Activated CD8-positive, alpha-beta T cell treated with anti-CD3 and anti-CD28 coated beads, Interleukin-2, amount 10 ng/mL, durations not matched to agents 7 days and 5 days (primary cell): ENCODE measurements at regions of chr1 and their contacts with region 1.

Region 1: GRCh38 chr1:32035119-32035518 is 21.5 kb downstream of the KHDRBS1 start:
- DNase-seq: no peak
- ATAC-seq: no peak
- H3K4me3 Mint-ChIP-seq: no peak overlapping the region
- H3K27ac Mint-ChIP-seq: peak overlapping the region; percentile 54
- H3K4me1 Mint-ChIP-seq: peaks cover 32% of the 10 kb centered on the region
- H3K27me3 Mint-ChIP-seq: no peaks in the 10 kb centered on the region

Region 2: DNA sequence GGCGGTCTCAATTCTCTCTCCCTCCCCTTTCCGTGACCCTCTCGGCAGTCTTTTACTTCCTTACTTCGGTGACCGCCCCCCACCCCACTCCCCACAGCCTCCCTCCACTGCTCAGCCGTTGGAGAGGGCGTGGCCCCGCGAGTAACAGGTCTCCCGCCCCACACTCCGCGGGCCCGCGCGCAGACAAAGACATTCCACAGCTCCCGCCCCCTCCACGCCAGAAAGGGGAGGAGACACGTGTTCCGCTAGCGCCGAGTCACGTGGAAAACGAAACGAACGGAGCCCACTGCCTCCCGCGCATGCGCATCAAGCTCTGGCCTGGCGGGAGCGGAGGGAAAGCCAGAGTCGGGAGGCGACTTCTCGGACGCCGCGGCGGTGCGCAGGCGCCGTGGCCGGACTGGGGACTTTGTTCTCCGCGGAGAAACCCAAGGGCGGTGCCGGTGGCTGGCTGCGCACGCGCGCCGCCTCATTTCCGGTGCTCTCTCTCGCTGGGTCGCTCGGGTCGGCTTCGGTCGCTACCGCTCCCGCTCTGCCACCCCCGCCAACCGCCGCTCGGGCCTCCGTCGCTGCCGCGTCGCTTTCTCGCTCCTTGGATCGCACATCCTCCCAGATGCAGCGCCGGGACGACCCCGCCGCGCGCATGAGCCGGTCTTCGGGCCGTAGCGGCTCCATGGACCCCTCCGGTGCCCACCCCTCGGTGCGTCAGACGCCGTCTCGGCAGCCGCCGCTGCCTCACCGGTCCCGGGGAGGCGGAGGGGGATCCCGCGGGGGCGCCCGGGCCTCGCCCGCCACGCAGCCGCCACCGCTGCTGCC is 21.5 kb before region 1 on chr1 and contains the start of gene KHDRBS1:
- CTCF ChIA-PET with region 1: no interaction called
- POLR2A ChIA-PET with region 1: interaction called, 10 read pairs
- DNase-seq: peak; percentile 99
- ATAC-seq: peak; percentile 87
- H3K4me3 Mint-ChIP-seq: peak within 1 kb of the TSS; percentile 96
- H3K27ac Mint-ChIP-seq: peak within 1 kb of the TSS; percentile 95
- H3K4me1 Mint-ChIP-seq: peaks cover 36% of the 10 kb centered on the region
- H3K27me3 Mint-ChIP-seq: no peaks in the 10 kb centered on the region
- total RNA-seq, gene KHDRBS1: 194 to 197 TPM

Region 3: DNA sequence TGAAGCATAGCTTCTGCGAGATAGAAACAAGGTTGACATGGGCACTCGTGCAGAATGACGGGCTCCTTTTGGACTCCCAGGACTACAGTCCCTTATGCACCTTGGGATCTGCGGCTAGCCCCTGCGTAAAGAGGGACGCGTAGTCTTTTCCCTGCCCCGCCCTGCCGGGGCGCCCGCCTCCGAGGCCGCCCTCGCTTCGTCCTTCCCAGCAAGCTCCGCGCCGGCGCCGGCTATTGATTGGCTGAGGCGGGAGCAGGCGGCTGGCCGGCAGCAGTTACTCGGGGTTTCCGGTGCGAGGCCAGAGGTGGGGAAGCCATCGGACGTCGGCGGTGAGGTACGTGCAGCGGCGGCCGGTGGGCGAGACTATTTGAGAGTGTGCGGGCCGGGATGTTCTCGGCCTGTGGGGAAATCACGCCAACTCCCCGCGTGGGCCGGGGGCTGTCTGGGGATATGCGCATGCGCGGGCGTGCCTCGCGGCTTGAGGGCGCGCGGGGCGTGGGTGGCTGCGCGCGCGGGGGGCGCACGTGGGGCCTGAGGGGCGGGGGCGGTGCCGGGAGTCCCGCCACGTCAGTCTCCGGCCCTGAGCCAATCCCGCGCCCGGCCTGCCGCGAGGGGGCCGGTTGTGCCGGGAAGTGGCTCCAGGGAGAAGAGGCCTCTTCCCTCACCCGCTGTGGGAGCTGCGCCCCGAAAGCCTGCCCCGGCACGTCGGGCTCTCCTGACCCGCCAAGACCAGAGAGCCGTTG is 144.5 kb after region 1 on chr1 and contains the start of gene TXLNA:
- CTCF ChIA-PET with region 1: no interaction called
- POLR2A ChIA-PET with region 1: no interaction called
- DNase-seq: peak; percentile 93
- ATAC-seq: peak; percentile 91
- H3K4me3 Mint-ChIP-seq: peak within 1 kb of the TSS; percentile 95
- H3K27ac Mint-ChIP-seq: peak within 1 kb of the TSS; percentile 99
- H3K4me1 Mint-ChIP-seq: peaks cover 45% of the 10 kb centered on the region
- H3K27me3 Mint-ChIP-seq: no peaks in the 10 kb centered on the region
- total RNA-seq, gene TXLNA: 79.7 to 79.8 TPM